Activated CD8-positive, alpha-beta memory T cell treated with anti-CD3 and anti-CD28 coated beads, Interleukin-2, amount 10 ng/mL, durations not matched to agents 7 days and 5 days (primary cell): ENCODE measurements at regions of chr10 and their contacts with region 1.

Region 1: DNA sequence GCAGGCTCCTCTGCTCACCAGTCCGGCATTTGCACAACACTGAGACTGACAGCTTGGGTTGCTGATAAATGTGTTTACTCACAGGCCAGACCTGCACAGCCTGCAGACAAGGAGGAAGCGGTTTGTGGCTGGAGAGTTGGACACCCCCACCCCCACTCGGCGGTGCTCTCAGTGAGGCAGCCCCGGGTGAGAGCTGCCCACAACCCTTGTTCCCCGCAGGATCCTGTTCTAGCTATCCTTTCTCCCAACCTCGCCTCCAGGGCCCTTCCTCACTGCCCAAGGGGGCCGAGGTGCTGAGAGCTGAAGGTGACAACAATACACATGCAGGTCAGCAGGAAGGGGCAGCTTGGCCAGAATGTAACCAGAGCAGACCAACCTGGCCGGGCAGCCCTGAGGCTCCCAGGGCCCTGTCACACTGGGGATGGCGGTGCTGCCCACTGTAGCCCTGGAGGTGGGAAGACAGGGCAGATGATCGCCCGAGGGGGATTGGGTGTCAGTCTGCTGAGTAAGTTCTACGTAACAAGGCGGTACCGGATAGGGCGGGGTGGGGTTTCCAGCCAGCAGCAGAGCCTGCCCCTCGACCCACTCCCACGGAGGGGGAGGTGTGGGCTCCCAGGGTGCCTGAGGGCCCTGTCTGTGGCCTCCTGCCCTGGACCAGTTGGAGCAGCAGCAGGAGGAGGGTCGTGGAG is 2.1 kb upstream of the ADAM8 start:
- DNase-seq: peak; percentile 95
- ATAC-seq: peak; percentile 59
- H3K4me3 Mint-ChIP-seq: peak overlapping the region; percentile 78
- H3K27ac Mint-ChIP-seq: peak overlapping the region; percentile 99
- H3K4me1 Mint-ChIP-seq: peaks cover 36% of the 10 kb centered on the region
- H3K27me3 Mint-ChIP-seq: no peaks in the 10 kb centered on the region

Region 2: GRCh38 chr10:133308421-133309110 is 29.8 kb after region 1 on chr10 and contains the starts of genes TUBGCP2 and ZNF511:
- CTCF ChIA-PET with region 1: interaction called, 25 read pairs
- DNase-seq: peak; percentile 91
- ATAC-seq: peak; percentile 82
- H3K4me3 Mint-ChIP-seq: peak within 1 kb of the TSS; percentile 96
- H3K27ac Mint-ChIP-seq: peak within 1 kb of the TSS; percentile 97
- H3K4me1 Mint-ChIP-seq: peaks cover 25% of the 10 kb centered on the region
- H3K27me3 Mint-ChIP-seq: no peaks in the 10 kb centered on the region
- total RNA-seq, gene TUBGCP2: 60.4 to 64.7 TPM
- total RNA-seq, gene ZNF511: 50.7 to 60.1 TPM